ENCODE measurements at regions of chr3 and their contacts with region 1.

Region 1: DNA sequence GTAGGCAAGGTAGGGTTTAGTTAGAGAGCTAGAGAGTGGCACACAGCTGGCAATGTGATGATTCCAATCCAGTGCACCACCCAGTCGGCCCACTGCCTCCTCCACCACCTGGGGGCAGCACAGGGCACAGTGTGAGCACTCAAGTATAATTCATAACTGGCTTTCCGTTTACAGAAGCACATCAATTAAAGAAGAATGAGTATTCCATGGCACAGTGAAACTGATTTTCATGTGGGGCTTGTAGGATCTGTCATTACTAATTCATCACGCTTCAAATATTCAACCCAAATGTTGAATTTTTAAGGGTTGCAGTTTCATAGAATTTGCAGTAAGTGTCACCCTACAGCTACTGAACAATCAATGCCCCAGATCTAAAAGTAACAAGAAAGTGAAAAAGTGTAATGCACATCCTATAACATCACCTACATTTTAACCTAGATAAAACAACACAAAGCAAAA is 149.9 kb downstream of the IGSF11 start:
- DNase-seq: peak; percentile 57
- H3K4me3 ChIP-seq: peak overlapping the region in 1 of 2 experiments; percentile 44; a peak in 1 of 4 replicates
- H3K27ac ChIP-seq: no peak overlapping the region
- H3K4me1 ChIP-seq: no peaks in the 10 kb centered on the region
- H3K27me3 ChIP-seq: no peaks in the 10 kb centered on the region
- CTCF ChIP-seq: peak; percentile 96
- EP300 ChIP-seq: no peak
- RAD21 ChIP-seq: peak; percentile 58

Region 2: GRCh38 chr3:118900737-118901525 is 16.2 kb after region 1 on chr3:
- CTCF ChIA-PET with region 1: interaction called, 67 read pairs
- POLR2A ChIA-PET with region 1: no interaction called
- DNase-seq: no peak
- H3K4me3 ChIP-seq: no peak overlapping the region
- H3K27ac ChIP-seq: no peak overlapping the region
- H3K4me1 ChIP-seq: no peaks in the 10 kb centered on the region
- H3K27me3 ChIP-seq: no peaks in the 10 kb centered on the region
- CTCF ChIP-seq: no peak
- EP300 ChIP-seq: no peak
- RAD21 ChIP-seq: no peak

Region 3: DNA sequence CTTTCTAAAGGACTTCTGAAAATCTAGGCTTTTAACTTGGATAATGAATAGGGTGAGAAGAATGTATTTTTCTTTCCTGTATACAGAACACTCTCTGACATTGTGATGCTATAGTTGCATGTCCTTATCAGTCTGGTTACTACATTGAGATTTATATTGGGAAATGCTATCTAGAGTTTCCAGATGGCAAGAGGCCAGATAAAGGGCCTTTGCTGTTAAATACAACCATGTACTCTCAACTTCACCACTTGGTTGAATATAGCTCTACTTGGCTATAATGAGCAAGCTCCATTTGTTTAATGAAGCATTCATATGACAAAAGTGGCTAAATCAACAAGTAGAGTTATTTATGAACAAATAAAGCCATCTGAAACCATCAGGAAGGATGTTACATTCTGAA is 58.8 kb after region 1 on chr3:
- CTCF ChIA-PET with region 1: interaction called, 11 read pairs
- POLR2A ChIA-PET with region 1: no interaction called
- DNase-seq: peak; percentile 13
- H3K4me3 ChIP-seq: no peak overlapping the region
- H3K27ac ChIP-seq: no peak overlapping the region
- H3K4me1 ChIP-seq: peaks cover 0 to 3% of the 10 kb centered on the region in 2 experiments; a peak in 1 of 4 replicates
- H3K27me3 ChIP-seq: no peaks in the 10 kb centered on the region
- CTCF ChIP-seq: no peak
- EP300 ChIP-seq: no peak
- RAD21 ChIP-seq: no peak

Region 4: GRCh38 chr3:119025171-119025795 is 140.5 kb after region 1 on chr3:
- CTCF ChIA-PET with region 1: interaction called, 432 read pairs
- POLR2A ChIA-PET with region 1: no interaction called
- DNase-seq: no peak
- H3K4me3 ChIP-seq: no peak overlapping the region
- H3K27ac ChIP-seq: no peak overlapping the region
- H3K4me1 ChIP-seq: no peaks in the 10 kb centered on the region
- H3K27me3 ChIP-seq: no peaks in the 10 kb centered on the region
- CTCF ChIP-seq: no peak
- EP300 ChIP-seq: no peak
- RAD21 ChIP-seq: no peak

Region 5: GRCh38 chr3:119063471-119063870 is 178.7 kb after region 1 on chr3:
- CTCF ChIA-PET with region 1: interaction called, 34 read pairs
- POLR2A ChIA-PET with region 1: no interaction called
- DNase-seq: no peak
- H3K4me3 ChIP-seq: no peak overlapping the region
- H3K27ac ChIP-seq: no peak overlapping the region
- H3K4me1 ChIP-seq: no peaks in the 10 kb centered on the region
- H3K27me3 ChIP-seq: no peaks in the 10 kb centered on the region
- CTCF ChIP-seq: no peak
- EP300 ChIP-seq: no peak
- RAD21 ChIP-seq: no peak

Region 6: GRCh38 chr3:119098619-119099222 is 213.9 kb after region 1 on chr3:
- CTCF ChIA-PET with region 1: interaction called, 521 read pairs
- POLR2A ChIA-PET with region 1: no interaction called
- DNase-seq: peak; percentile 38
- H3K4me3 ChIP-seq: no peak overlapping the region; a peak in 1 of 4 replicates
- H3K27ac ChIP-seq: no peak overlapping the region
- H3K4me1 ChIP-seq: no peaks in the 10 kb centered on the region
- H3K27me3 ChIP-seq: no peaks in the 10 kb centered on the region
- CTCF ChIP-seq: peak; percentile 89
- EP300 ChIP-seq: no peak
- RAD21 ChIP-seq: peak; percentile 95

Region 7: GRCh38 chr3:119240591-119241434 is 356.0 kb after region 1 on chr3 and contains the start of gene B4GALT4:
- CTCF ChIA-PET with region 1: interaction called, 18 read pairs
- POLR2A ChIA-PET with region 1: no interaction called
- DNase-seq: peak; percentile 94
- H3K4me3 ChIP-seq: peak within 1 kb of the TSS; percentile 73 to 83
- H3K27ac ChIP-seq: peak within 1 kb of the TSS; percentile 79 to 89
- H3K4me1 ChIP-seq: peaks cover 1 to 4% of the 10 kb centered on the region in 2 experiments; a peak in 3 of 4 replicates
- H3K27me3 ChIP-seq: no peaks in the 10 kb centered on the region
- CTCF ChIP-seq: no peak
- EP300 ChIP-seq: no peak
- RAD21 ChIP-seq: no peak
- polyA plus RNA-seq, gene B4GALT4: 15.7 and 19.8 TPM in 2 replicates

Measured in SK-N-SH (cell line).